ENCODE measurements at regions of chr19 and their contacts with region 1.

Region 1: DNA sequence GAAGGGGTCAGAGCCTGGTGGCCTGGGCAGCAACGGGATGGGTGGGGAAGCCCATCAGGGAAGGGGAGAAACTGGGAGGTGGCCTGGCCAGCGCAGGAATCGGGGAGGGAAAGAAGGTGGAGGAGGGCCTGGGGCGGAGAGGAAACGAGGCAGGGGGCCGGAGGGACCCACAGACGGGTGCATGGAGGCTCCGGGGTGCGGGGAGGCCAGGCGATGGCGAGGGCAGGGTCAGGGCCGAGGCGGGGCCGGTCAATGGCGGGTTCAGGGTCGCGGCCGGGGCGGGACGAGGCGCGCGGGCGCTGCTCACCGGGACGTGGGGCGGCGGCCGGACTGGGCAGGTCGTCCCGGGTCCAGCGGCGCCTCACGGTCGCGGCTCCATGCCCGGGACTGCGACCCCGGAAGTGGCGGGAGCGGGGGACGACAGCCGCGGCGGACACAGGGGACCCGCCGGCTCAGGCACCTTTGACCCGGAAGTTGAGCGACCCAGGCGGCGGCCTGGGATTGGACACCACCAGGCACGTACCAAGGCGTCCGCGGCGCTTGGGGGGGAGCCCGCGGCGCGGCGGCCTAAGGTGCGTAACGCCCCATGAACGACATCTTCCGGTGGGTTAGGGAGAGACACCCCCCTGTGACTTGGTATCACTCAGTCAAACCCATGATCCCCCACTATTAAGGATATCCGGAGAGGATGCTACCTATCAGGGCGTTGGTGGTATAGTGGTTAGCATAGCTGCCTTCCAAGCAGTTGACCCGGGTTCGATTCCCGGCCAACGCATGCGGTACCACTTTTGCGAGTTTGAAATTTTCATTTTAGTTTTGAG is at the start of gene DPP9:
- DNase-seq: peak; percentile 93 to 99 (median 96)
- ATAC-seq: peak; percentile 94
- H3K4me3 ChIP-seq: peak within 1 kb of the TSS; percentile 76 to 78
- H3K4me3 Mint-ChIP-seq: peak within 1 kb of the TSS; percentile 93
- H3K27ac ChIP-seq: peak within 1 kb of the TSS; percentile 78 to 79
- H3K27ac Mint-ChIP-seq: peak within 1 kb of the TSS; percentile 97
- H3K4me1 ChIP-seq: peaks cover 31% of the 10 kb centered on the region
- H3K4me1 Mint-ChIP-seq: peaks cover 32% of the 10 kb centered on the region
- H3K27me3 ChIP-seq: no peaks in the 10 kb centered on the region
- H3K27me3 Mint-ChIP-seq: no peaks in the 10 kb centered on the region
- CTCF ChIP-seq: no peak
- total RNA-seq, gene DPP9: 85.5 to 86.6 TPM

Region 2: DNA sequence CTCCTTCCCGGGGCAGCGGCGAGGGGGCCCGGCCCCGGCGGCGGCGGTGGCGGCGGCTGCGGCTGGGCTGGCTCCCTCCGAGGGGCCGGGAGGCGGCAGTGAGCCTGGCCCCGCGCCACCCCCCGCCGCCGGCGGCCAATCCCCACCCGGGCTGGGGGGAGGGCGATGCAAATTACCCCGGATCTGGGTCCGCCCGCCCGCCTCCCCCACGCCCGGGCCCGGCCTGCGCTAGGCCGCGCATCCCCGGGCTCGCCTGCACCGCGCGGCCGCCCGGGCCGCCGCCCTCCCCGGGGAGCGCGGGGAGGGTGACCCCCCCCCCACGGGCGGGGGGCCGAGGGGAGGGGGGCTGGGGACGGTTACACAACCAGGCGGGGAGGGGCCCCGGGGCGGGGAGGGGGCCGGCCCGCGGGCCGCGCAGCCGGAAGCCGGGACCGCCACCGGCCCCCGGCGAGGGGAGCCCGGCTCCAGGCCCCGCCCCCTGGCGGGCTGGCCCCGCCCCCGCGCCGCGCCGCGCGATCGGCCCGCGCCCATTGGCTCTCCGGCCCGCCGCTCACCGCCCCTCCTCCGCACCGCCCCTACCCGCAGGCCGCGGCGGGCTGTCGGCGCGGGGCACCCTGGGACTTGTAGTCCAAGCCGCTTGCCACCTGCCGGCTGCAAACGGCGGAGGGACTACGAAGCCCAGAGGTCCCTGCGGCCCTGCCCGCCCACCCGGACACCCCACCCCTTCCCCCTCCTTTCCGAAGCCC is 658.0 kb before region 1 on chr19:
- CTCF ChIA-PET with region 1: no interaction called
- POLR2A ChIA-PET with region 1: no interaction called
- intact Hi-C with region 1: loop called in 1 of 2 experiments (anchors 5 kb)
- DNase-seq: peak; percentile 94 to 99 (median 97)
- ATAC-seq: peak; percentile 72
- H3K4me3 ChIP-seq: peak overlapping the region; percentile 86 to 89
- H3K4me3 Mint-ChIP-seq: peak overlapping the region; percentile 73
- H3K27ac ChIP-seq: no peak overlapping the region
- H3K27ac Mint-ChIP-seq: no peak overlapping the region
- H3K4me1 ChIP-seq: peaks cover 58% of the 10 kb centered on the region
- H3K4me1 Mint-ChIP-seq: peaks cover 40% of the 10 kb centered on the region
- H3K27me3 ChIP-seq: no peaks in the 10 kb centered on the region
- H3K27me3 Mint-ChIP-seq: no peaks in the 10 kb centered on the region
- CTCF ChIP-seq: no peak

Region 3: GRCh38 chr19:4638828-4639530 is 84.6 kb before region 1 on chr19 and contains the start of gene TNFAIP8L1:
- CTCF ChIA-PET with region 1: interaction called, 5 read pairs
- POLR2A ChIA-PET with region 1: no interaction called
- intact Hi-C with region 1: loop called (anchors 1 kb)
- DNase-seq: peak; percentile 97 to 100 (median 99)
- ATAC-seq: peak; percentile 94
- H3K4me3 ChIP-seq: peak within 1 kb of the TSS; percentile 83 to 94
- H3K4me3 Mint-ChIP-seq: peak within 1 kb of the TSS; percentile 94
- H3K27ac ChIP-seq: peak within 1 kb of the TSS; percentile 68 to 96
- H3K27ac Mint-ChIP-seq: peak within 1 kb of the TSS; percentile 95
- H3K4me1 ChIP-seq: peaks cover 45% of the 10 kb centered on the region
- H3K4me1 Mint-ChIP-seq: peaks cover 34% of the 10 kb centered on the region
- H3K27me3 ChIP-seq: no peaks in the 10 kb centered on the region
- H3K27me3 Mint-ChIP-seq: no peaks in the 10 kb centered on the region
- CTCF ChIP-seq: no peak
- total RNA-seq, gene TNFAIP8L1: 4.3 to 4.5 TPM

Region 4: GRCh38 chr19:4768934-4769777 is 45.6 kb after region 1 on chr19:
- CTCF ChIA-PET with region 1: no interaction called
- POLR2A ChIA-PET with region 1: interaction called, 3 read pairs
- intact Hi-C with region 1: loop called in 1 of 2 experiments (anchors 2 kb)
- DNase-seq: peak; percentile 61 to 89 (median 80)
- ATAC-seq: peak; percentile 99
- H3K4me3 ChIP-seq: no peak overlapping the region
- H3K4me3 Mint-ChIP-seq: no peak overlapping the region
- H3K27ac ChIP-seq: no peak overlapping the region
- H3K27ac Mint-ChIP-seq: no peak overlapping the region
- H3K4me1 ChIP-seq: no peaks in the 10 kb centered on the region
- H3K4me1 Mint-ChIP-seq: peaks cover 3% of the 10 kb centered on the region
- H3K27me3 ChIP-seq: peaks cover 0 to 8% of the 10 kb centered on the region in 2 experiments
- H3K27me3 Mint-ChIP-seq: peaks cover 26% of the 10 kb centered on the region
- CTCF ChIP-seq: no peak

Region 5: GRCh38 chr19:4916292-4917082 is 192.9 kb after region 1 on chr19:
- CTCF ChIA-PET with region 1: no interaction called
- POLR2A ChIA-PET with region 1: no interaction called
- intact Hi-C with region 1: loop called (anchors 2 kb)
- DNase-seq: peak; percentile 19 to 82 (median 64)
- ATAC-seq: peak; percentile 30
- H3K4me3 ChIP-seq: peak overlapping the region; percentile 96 to 100
- H3K4me3 Mint-ChIP-seq: peak overlapping the region; percentile 99
- H3K27ac ChIP-seq: peak overlapping the region; percentile 90 to 96
- H3K27ac Mint-ChIP-seq: peak overlapping the region; percentile 100
- H3K4me1 ChIP-seq: peaks cover 34% of the 10 kb centered on the region
- H3K4me1 Mint-ChIP-seq: peaks cover 41% of the 10 kb centered on the region
- H3K27me3 ChIP-seq: no peaks in the 10 kb centered on the region
- H3K27me3 Mint-ChIP-seq: no peaks in the 10 kb centered on the region
- CTCF ChIP-seq: no peak

Region 6: GRCh38 chr19:5250127-5250659 is 526.6 kb after region 1 on chr19:
- CTCF ChIA-PET with region 1: no interaction called
- POLR2A ChIA-PET with region 1: no interaction called
- intact Hi-C with region 1: no loop called
- DNase-seq: no peak
- ATAC-seq: no peak
- H3K4me3 ChIP-seq: no peak overlapping the region
- H3K4me3 Mint-ChIP-seq: no peak overlapping the region
- H3K27ac ChIP-seq: no peak overlapping the region
- H3K27ac Mint-ChIP-seq: no peak overlapping the region
- H3K4me1 ChIP-seq: no peaks in the 10 kb centered on the region
- H3K4me1 Mint-ChIP-seq: no peaks in the 10 kb centered on the region
- H3K27me3 ChIP-seq: no peaks in the 10 kb centered on the region
- H3K27me3 Mint-ChIP-seq: peaks cover 9% of the 10 kb centered on the region
- CTCF ChIP-seq: no peak

Region 7: GRCh38 chr19:5622463-5623396 is 899.2 kb after region 1 on chr19 and contains the starts of genes SAFB and SAFB2:
- CTCF ChIA-PET with region 1: no interaction called
- POLR2A ChIA-PET with region 1: no interaction called
- intact Hi-C with region 1: loop called in 1 of 2 experiments (anchors 5 kb)
- DNase-seq: peak; percentile 99 to 100 (median 99)
- ATAC-seq: peak; percentile 87
- H3K4me3 ChIP-seq: peak within 1 kb of the TSS; percentile 91 to 93
- H3K4me3 Mint-ChIP-seq: peak within 1 kb of the TSS; percentile 100
- H3K27ac ChIP-seq: peak within 1 kb of the TSS; percentile 90 to 94
- H3K27ac Mint-ChIP-seq: peak within 1 kb of the TSS; percentile 99
- H3K4me1 ChIP-seq: peaks cover 77% of the 10 kb centered on the region
- H3K4me1 Mint-ChIP-seq: peaks cover 69% of the 10 kb centered on the region
- H3K27me3 ChIP-seq: no peaks in the 10 kb centered on the region
- H3K27me3 Mint-ChIP-seq: no peaks in the 10 kb centered on the region
- CTCF ChIP-seq: no peak
- total RNA-seq, gene SAFB: 190 to 191 TPM
- total RNA-seq, gene SAFB2: 293 to 302 TPM

Region 8: DNA sequence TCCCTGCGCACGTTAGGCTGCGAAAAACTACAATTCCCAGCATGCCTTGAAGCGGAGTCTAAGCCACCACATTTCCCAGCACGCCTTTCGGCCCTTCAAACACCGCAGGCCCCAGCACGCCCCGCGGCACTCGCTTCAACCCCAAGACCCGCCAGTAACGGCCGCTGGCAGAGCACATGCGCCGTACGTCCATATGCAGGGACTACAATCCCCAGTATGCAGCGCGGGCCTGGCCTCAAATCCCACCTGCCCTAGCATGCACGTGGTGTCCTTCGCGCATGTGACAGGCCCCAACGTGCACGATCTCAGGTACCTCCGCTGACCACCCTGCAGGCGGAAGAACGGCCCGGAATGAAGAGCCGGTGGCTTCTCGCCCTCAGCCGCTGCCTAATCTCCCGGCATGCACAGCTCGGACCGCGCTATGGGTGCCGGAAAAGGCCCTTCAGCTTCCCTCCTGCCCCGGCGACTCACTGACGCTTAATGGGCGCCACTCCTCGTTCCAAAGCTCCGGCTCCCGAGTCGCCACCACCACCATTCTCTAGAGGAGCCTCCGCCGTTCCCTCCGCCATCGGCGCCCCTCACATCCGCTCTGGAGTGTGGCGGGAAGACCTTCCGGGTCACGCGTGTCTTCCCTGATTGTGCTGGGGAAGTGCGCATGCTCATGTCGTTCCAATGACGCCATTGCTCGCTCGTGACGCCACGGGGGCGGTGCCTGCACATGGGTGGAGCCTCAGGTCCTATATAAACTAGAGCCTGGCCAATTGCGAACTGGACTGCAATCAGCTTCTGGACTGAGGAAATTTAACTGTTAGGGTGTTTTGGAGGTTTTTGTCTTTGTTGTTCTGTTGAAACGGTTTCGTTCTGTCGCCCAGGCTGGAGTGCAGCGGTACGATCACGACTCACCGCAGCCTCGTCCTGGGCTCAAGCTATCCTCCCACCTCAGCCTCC is 1067.3 kb after region 1 on chr19 and contains the start of gene DUS3L:
- CTCF ChIA-PET with region 1: no interaction called
- POLR2A ChIA-PET with region 1: no interaction called
- intact Hi-C with region 1: loop called in 1 of 2 experiments (anchors 5 kb)
- DNase-seq: peak; percentile 91 to 98 (median 94)
- ATAC-seq: peak; percentile 95
- H3K4me3 ChIP-seq: peak within 1 kb of the TSS; percentile 86 to 91
- H3K4me3 Mint-ChIP-seq: peak within 1 kb of the TSS; percentile 97
- H3K27ac ChIP-seq: peak within 1 kb of the TSS; percentile 94 to 97
- H3K27ac Mint-ChIP-seq: peak within 1 kb of the TSS; percentile 99
- H3K4me1 ChIP-seq: peaks cover 7% of the 10 kb centered on the region
- H3K4me1 Mint-ChIP-seq: peaks cover 17% of the 10 kb centered on the region
- H3K27me3 ChIP-seq: no peaks in the 10 kb centered on the region
- H3K27me3 Mint-ChIP-seq: peaks cover 2% of the 10 kb centered on the region
- CTCF ChIP-seq: no peak
- total RNA-seq, gene DUS3L: 174 to 192 TPM